ENCODE measurements at regions of chr4 and their contacts with region 1.

Region 1: DNA sequence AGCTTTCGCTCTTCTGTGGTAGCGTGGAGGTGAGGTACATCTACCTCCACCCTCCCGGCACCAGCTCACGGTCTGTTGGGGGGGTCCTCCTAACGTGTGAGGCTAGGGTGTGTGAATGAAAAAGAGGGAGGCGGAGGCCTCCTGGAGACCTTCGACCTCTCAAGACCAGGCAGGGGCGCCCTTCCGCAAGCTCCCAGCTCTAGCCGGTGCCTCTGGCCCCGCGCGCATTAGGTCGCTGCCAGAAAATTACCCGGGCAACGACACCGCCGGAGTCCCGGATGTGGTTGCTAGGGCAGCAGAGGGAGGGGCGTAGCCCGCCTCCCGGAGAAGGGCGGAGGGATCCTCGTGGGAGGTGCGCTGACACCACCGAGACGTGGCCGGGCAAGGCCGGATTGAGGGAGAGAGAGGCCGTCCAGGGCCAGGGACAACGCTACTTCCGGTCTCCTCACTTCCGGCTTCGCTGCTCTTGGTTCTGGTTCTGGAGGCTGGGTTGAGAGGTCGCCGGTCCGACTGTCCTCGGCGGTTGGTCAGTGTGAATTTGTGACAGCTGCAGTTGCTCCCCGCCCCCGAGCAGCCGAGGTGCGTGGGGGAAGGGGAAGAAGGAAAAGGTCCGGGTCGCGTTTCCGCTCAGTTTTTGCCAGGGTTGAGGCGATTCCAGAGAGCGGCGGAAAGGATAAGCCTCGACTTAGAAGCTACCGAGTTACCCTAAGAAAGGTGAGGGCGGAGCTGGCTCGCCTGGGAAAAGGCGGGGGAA is at the starts of genes ARFIP1 and TIGD4:
- DNase-seq: peak; percentile 97
- H3K4me3 Mint-ChIP-seq: peak within 1 kb of the TSS; percentile 87
- H3K27ac Mint-ChIP-seq: peak within 1 kb of the TSS; percentile 91
- H3K4me1 Mint-ChIP-seq: peaks cover 24% of the 10 kb centered on the region
- H3K27me3 Mint-ChIP-seq: peaks cover 13% of the 10 kb centered on the region
- CTCF ChIP-seq: no peak
- total RNA-seq, gene ARFIP1: 26.7 and 35.5 TPM in 2 replicates
- total RNA-seq, gene TIGD4: 0.12 and 0.32 TPM in 2 replicates

Region 2: DNA sequence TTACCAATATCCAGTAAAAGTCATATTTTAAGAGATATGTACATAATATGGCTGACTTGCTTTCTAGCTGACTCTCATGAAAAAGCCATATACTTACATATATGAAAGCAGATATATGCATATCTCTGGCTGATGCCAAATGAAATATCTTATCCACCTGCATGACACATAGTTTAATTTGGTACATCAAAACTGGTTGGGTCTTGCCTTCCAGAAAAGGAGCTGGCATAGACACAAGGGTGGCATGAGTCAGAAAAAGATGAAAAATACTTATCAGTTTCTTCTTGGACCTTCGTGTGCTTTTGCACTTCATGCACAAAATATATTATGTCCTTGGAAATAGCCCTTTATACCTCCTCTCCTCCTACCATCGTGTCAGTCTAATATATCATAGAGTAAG is 32.2 kb before region 1 on chr4:
- CTCF ChIA-PET with region 1: no interaction called
- POLR2A ChIA-PET with region 1: interaction called, 16 read pairs
- intact Hi-C with region 1: no loop called
- DNase-seq: peak; percentile 20
- H3K4me3 Mint-ChIP-seq: no peak overlapping the region
- H3K27ac Mint-ChIP-seq: no peak overlapping the region
- H3K4me1 Mint-ChIP-seq: peaks cover 5% of the 10 kb centered on the region
- H3K27me3 Mint-ChIP-seq: no peaks in the 10 kb centered on the region
- CTCF ChIP-seq: no peak

Measured in MCF 10A (cell line).